CD4-positive, alpha-beta T cell (primary cell): ENCODE measurements at regions of chr13 and their contacts with region 1.

Region 1: DNA sequence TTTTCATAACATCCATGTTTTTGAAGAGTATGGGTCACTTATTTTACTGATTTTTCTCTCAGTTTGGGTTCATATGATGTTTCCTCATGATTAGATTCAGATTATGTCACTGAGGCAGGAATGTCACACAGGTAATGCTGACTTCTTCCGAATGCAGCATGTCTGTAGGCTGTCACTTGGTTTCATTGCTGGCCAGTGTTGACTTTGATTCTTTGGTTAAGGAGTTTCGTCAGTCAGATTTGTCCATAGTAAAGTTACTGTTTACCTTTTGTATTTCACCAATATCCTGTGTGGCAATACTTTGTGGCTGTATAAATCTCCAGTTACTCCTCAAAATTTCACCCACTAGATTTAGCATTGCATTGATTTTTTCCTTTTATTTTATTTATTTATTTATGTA is 105.6 kb downstream of the MRPL57 start:
- DNase-seq: no peak
- ATAC-seq: no peak
- H3K4me3 ChIP-seq: no peak overlapping the region
- H3K4me3 Mint-ChIP-seq: no peak overlapping the region
- H3K27ac ChIP-seq: no peak overlapping the region
- H3K27ac Mint-ChIP-seq: no peak overlapping the region
- H3K4me1 ChIP-seq: no peaks in the 10 kb centered on the region
- H3K4me1 Mint-ChIP-seq: no peaks in the 10 kb centered on the region
- H3K27me3 ChIP-seq: peaks cover 4 to 7% of the 10 kb centered on the region in 2 experiments
- H3K27me3 Mint-ChIP-seq: peaks cover 21% of the 10 kb centered on the region
- CTCF ChIP-seq: no peak

Region 2: DNA sequence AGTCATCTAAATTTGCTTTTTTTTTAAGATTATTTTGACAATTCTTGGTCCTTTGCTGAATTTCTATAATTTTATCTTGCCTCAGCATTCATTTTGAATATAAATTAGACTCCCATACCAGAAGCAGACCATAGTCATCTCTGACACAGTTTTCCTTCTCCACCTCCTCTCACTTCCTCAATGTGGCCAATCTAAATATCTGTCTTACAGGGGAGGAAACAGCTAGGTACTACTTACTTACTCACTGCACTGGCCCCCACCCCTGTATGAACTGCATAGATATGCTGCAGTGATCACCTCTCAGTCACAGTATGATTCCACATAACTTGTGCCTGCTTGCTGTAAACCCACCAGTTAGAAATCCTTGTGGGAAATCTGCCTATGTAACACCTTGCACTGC is 1054.4 kb after region 1 on chr13:
- CTCF ChIA-PET with region 1: no interaction called
- POLR2A ChIA-PET with region 1: no interaction called
- intact Hi-C with region 1: loop called in 1 of 2 experiments (anchors 5 kb)
- DNase-seq: no peak
- ATAC-seq: no peak
- H3K4me3 ChIP-seq: no peak overlapping the region
- H3K4me3 Mint-ChIP-seq: no peak overlapping the region
- H3K27ac ChIP-seq: no peak overlapping the region
- H3K27ac Mint-ChIP-seq: no peak overlapping the region
- H3K4me1 ChIP-seq: no peaks in the 10 kb centered on the region
- H3K4me1 Mint-ChIP-seq: no peaks in the 10 kb centered on the region
- H3K27me3 ChIP-seq: no peaks in the 10 kb centered on the region
- H3K27me3 Mint-ChIP-seq: peaks cover 13% of the 10 kb centered on the region
- CTCF ChIP-seq: no peak